ENCODE measurements at regions of chr4 and their contacts with region 1.

Region 1: DNA sequence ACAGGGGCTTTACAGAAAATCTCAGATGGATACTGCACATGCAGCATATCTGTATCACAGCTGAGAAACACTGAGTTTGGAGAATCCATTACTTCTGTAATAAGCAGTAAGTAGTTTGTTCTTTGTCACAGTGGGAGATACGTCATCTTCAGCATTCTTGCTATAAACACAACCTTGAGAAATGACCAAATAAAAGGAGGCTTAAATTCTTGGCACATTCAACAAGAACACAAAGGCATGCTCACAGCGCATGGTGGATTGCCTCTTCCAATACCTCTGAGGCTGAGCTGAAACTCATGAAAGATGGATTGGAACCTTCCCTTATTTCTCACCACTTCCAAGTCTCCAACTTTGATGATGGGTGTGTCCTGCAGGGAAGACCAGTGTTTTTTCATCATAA is 54.5 kb downstream of the ANXA5 start:
- DNase-seq: peak; percentile 28
- ATAC-seq: no peak
- H3K4me3 ChIP-seq: no peak overlapping the region
- H3K27ac ChIP-seq: no peak overlapping the region
- H3K4me1 ChIP-seq: no peaks in the 10 kb centered on the region
- H3K27me3 ChIP-seq: no peaks in the 10 kb centered on the region
- CTCF ChIP-seq: no peak
- POLR2A ChIP-seq: no peak
- RAD21 ChIP-seq: no peak

Region 2: GRCh38 chr4:121484633-121485032 is 157.7 kb before region 1 on chr4:
- CTCF ChIA-PET with region 1: no interaction called
- POLR2A ChIA-PET with region 1: no interaction called
- dilution Hi-C with region 1: no loop called
- in situ Hi-C with region 1: no loop called
- intact Hi-C with region 1: loop called (anchors 5 kb)
- DNase-seq: peak; percentile 66
- ATAC-seq: peak; percentile 100
- H3K4me3 ChIP-seq: no peak overlapping the region
- H3K27ac ChIP-seq: no peak overlapping the region
- H3K4me1 ChIP-seq: no peaks in the 10 kb centered on the region
- H3K27me3 ChIP-seq: peaks cover 2% of the 10 kb centered on the region; the same call in 1 of the 2 replicates
- CTCF ChIP-seq: peak; percentile 79
- POLR2A ChIP-seq: no peak
- RAD21 ChIP-seq: peak; percentile 75